HCT116 (cell line): ENCODE measurements at regions of chr1 and their contacts with region 1.

Region 1: GRCh38 chr1:178282949-178283367 is 189.1 kb downstream of the RASAL2 start:
- DNase-seq: peak; percentile 26
- ATAC-seq: peak; percentile 70
- H3K4me3 ChIP-seq: no peak overlapping the region
- H3K27ac ChIP-seq: no peak overlapping the region
- H3K4me1 ChIP-seq: no peaks in the 10 kb centered on the region; a peak in 1 of 4 replicates
- H3K27me3 ChIP-seq: no peaks in the 10 kb centered on the region
- CTCF ChIP-seq: peak; percentile 48 to 81 (median 55)
- POLR2A ChIP-seq: no peak
- RAD21 ChIP-seq: peak; percentile 84

Region 2: GRCh38 chr1:176919386-176920378 is 1363.3 kb before region 1 on chr1:
- CTCF ChIA-PET with region 1: no interaction called
- POLR2A ChIA-PET with region 1: no interaction called
- RAD21 ChIA-PET with region 1: no interaction called
- intact Hi-C with region 1: loop called (anchors 5 kb)
- DNase-seq: no peak
- ATAC-seq: no peak
- H3K4me3 ChIP-seq: no peak overlapping the region
- H3K27ac ChIP-seq: no peak overlapping the region
- H3K4me1 ChIP-seq: no peaks in the 10 kb centered on the region
- H3K27me3 ChIP-seq: peaks cover 26% of the 10 kb centered on the region; the same call in 1 of the 2 replicates
- CTCF ChIP-seq: no peak
- POLR2A ChIP-seq: no peak
- RAD21 ChIP-seq: no peak

Region 3: GRCh38 chr1:178031856-178032320 is 251.1 kb before region 1 on chr1:
- CTCF ChIA-PET with region 1: interaction called, 41 read pairs
- POLR2A ChIA-PET with region 1: no interaction called
- RAD21 ChIA-PET with region 1: interaction called, 4 read pairs
- intact Hi-C with region 1: loop called (anchors 1 kb)
- DNase-seq: peak; percentile 66
- ATAC-seq: peak; percentile 98
- H3K4me3 ChIP-seq: no peak overlapping the region
- H3K27ac ChIP-seq: no peak overlapping the region
- H3K4me1 ChIP-seq: peaks cover 0 to 4% of the 10 kb centered on the region in 2 experiments; a peak in 1 of 4 replicates
- H3K27me3 ChIP-seq: no peaks in the 10 kb centered on the region
- CTCF ChIP-seq: peak; percentile 67 to 93 (median 86); a peak in 5 of 6 replicates
- POLR2A ChIP-seq: no peak
- RAD21 ChIP-seq: peak; percentile 86